ENCODE measurements at regions of chr12 and their contacts with region 1.

Region 1: GRCh38 chr12:84502907-84503787 is 409.5 kb downstream of the SLC6A15 start:
- DNase-seq: peak in 1 of 2 donors; percentile 27
- ATAC-seq: peak; percentile 70

Region 2: DNA sequence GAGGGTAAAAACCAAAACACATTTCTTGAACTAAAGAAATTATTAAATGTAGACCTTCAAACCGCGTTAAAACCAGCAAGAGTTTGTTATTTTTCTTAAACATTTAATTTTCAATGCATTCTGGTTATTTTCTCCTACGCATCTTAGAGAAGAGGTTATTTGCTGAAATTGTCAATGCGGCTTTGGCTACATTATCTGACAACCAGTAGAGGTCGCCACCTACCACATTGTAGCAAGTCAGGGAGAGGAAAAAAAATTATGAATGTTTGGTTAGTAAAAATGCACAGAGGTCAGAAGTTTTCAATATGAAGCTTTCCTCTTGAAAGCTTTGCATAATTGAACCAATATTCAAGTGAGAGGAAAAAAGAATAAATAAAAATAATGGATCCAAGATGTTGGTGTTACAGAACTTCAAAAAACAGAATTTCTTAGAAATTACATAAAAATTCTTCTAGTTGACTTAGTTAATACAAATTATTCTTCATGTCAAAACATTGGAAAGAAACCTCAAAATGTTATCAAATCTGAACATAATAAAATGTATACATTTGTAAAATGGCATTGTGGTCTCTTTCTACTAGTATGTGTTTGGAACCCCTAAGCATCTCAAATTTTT is 1975.9 kb before region 1 on chr12:
- intact Hi-C with region 1: loop called in 1 of 2 experiments (anchors 10 kb)
- DNase-seq: peak in 1 of 2 donors; percentile 14
- ATAC-seq: peak; percentile 64

Measured in left colon (tissue), 2 donors.